KBM-7 (cell line): ENCODE measurements at regions of chr9 and their contacts with region 1.

Region 1: GRCh38 chr9:763692-764524 is 77.6 kb upstream of the DMRT1 start:
- DNase-seq: peak; percentile 94

Region 2: GRCh38 chr9:589723-590122 is 174.2 kb before region 1 on chr9:
- in situ Hi-C with region 1: no loop called
- DNase-seq: peak; percentile 56

Region 3: GRCh38 chr9:613771-614347 is 150.0 kb before region 1 on chr9:
- in situ Hi-C with region 1: loop called (anchors 10 kb)
- DNase-seq: peak; percentile 98